ENCODE measurements at regions of chr1 and their contacts with region 1.

Region 1: DNA sequence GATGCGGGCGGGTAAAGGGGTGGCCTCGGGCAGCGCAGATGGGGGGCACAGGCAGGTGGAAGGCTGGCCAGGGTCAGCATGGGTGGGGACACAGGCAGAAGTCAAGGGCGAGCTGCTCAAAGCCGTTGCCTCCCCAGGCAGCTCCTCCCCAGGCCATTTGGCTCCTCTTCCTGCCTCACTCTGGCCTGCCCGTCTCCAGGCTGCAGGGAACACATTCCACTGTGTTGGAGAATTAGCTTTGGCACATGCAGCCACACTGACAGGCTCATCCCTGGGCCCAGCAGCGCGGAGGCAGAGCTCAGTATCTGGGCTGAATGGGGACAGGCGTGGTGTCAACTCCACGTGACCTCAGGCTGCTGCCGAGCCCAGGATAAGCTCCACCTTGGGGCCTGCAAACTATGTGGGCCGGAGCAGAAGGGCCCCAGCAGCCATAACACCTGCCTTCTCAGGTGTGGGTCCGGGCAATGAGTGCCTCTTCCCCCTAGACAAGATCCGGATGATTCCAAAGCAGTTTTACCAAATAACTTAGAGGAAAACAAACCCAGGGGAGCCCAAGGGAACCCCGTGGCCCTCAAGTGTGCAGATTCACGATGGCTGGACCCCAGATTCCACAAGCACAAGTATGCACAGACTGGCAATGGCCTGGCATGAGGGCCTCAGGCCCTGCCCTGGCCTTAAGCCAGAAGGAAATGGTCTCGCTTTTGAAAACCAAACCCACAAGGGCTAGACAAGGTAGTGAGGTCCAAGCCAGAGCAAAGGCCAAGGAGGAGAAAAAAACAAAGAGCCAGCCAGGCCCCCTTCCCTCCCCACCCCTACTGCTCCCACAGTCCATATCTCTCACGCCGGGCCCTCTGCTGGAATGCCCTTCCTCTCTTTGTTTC is 40.2 kb downstream of the HSPG2 start:
- DNase-seq: peak; percentile 83
- H3K4me3 ChIP-seq: no peak overlapping the region
- H3K27ac ChIP-seq: peak overlapping the region; percentile 51 to 62
- H3K4me1 ChIP-seq: peaks cover 50% of the 10 kb centered on the region
- H3K27me3 ChIP-seq: no peaks in the 10 kb centered on the region
- CTCF ChIP-seq: no peak
- POLR2A ChIP-seq: no peak

Region 2: DNA sequence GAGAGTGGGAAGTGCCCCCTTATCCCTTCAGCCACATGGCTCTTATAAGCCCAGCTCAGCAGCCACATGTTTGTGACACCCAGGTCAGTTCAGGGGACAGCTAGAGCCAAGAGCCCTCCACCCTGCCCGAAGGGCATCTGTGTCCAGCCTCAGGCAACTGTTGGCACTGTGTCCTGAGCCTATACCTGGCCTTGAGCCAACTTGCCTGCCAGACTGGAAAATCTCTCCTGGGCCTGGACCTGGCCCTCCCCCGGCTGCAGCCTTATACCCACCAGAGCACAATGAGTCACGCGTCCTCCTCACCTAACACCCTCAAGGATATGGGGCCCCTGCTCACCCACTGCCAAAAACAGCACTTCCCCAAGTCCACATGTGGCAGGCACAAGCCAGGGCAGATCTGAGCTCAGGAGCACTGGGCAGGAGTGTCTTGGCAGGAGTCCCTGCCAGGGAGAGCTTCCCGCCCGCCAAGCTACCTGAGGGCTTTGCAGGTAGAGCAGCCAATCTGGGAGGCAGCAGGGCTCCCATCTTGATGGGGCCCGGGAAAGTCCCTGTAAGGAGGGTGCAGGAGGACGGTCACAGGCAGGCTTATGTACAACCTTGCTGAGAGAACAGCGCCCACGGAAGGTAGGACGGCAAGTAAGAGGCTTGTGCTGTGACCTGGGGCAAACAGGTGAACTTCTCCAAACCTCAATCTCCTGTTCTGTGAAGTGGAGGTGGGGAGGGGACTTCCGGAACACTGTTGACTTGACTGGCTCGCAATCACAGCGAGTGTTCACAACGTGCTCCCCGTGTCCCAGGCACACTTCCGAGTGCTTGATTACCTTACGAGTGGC is 60.0 kb after region 1 on chr1:
- intact Hi-C with region 1: loop called (anchors 10 kb)
- DNase-seq: no peak
- H3K4me3 ChIP-seq: no peak overlapping the region
- H3K27ac ChIP-seq: no peak overlapping the region
- H3K4me1 ChIP-seq: peaks cover 21% of the 10 kb centered on the region
- H3K27me3 ChIP-seq: no peaks in the 10 kb centered on the region
- CTCF ChIP-seq: no peak
- POLR2A ChIP-seq: no peak

Region 3: GRCh38 chr1:22001409-22001808 is 104.5 kb after region 1 on chr1 and contains the start of gene CELA3A:
- intact Hi-C with region 1: no loop called
- DNase-seq: no peak
- H3K4me3 ChIP-seq: no peak within 1 kb of the TSS
- H3K27ac ChIP-seq: no peak within 1 kb of the TSS
- H3K4me1 ChIP-seq: no peaks in the 10 kb centered on the region
- H3K27me3 ChIP-seq: no peaks in the 10 kb centered on the region
- CTCF ChIP-seq: no peak
- POLR2A ChIP-seq: no peak
- total RNA-seq, gene CELA3A: not detected

Measured in testis (tissue), 5 donors.